ENCODE measurements at regions of chrX and their contacts with region 1.

Region 1: DNA sequence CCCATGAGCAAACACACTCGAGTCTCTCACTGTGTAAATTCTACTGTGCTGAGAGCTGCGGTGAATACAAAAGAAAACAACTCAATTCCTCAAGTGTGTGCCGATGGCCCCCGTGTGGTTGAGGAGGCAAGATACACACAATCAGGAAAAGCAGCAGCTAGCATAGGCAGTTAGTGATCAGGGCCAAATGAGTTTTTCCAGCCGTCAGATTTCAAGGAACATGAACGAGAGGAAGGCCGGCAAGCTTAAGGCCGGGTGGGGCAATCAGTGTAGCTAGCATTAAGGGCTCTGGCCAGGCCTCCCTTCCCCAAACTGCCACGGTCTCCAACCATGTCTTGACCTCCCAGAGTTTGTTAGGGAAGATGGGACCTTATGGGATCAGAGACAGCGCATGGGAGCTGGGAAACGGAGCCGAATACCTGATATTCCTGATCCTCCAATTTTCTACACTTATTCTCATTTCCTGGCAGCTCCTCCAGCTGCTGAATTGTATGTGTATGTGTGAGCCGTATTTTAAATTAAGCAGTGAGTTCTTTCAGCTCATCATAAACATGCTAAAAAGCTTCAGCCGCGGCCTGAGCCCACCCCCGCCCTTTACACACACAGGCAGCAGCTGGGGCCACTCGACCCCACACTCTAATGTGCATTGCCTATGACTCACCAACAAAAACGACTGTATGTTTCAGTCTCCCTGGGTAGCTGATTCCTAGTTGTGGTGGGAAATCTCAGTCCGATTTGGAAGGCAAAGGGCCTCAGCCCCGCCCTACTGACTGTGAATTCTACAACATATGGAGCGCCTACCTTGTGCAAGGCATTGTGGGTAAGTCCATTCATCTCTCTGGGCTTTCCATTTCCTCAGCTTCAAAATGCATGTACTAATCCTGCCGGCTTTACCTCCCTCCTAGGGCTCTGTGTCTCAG is 59.9 kb downstream of the RTL9 start:
- DNase-seq: no peak
- ATAC-seq: peak; percentile 78
- H3K4me3 ChIP-seq: no peak overlapping the region
- H3K27ac ChIP-seq: no peak overlapping the region
- H3K4me1 ChIP-seq: no peaks in the 10 kb centered on the region
- H3K27me3 ChIP-seq: peaks cover 3% of the 10 kb centered on the region; the same call in 1 of the 2 replicates
- CTCF ChIP-seq: peak; percentile 68

Region 2: GRCh38 chrX:110402479-110403230 is 15.9 kb before region 1 on chrX:
- CTCF ChIA-PET with region 1: no interaction called
- POLR2A ChIA-PET with region 1: no interaction called
- in situ Hi-C with region 1: no loop called
- intact Hi-C with region 1: no loop called
- DNase-seq: no peak
- ATAC-seq: no peak
- H3K4me3 ChIP-seq: no peak overlapping the region
- H3K27ac ChIP-seq: no peak overlapping the region
- H3K4me1 ChIP-seq: no peaks in the 10 kb centered on the region
- H3K27me3 ChIP-seq: peaks cover 7% of the 10 kb centered on the region
- CTCF ChIP-seq: no peak

Region 3: DNA sequence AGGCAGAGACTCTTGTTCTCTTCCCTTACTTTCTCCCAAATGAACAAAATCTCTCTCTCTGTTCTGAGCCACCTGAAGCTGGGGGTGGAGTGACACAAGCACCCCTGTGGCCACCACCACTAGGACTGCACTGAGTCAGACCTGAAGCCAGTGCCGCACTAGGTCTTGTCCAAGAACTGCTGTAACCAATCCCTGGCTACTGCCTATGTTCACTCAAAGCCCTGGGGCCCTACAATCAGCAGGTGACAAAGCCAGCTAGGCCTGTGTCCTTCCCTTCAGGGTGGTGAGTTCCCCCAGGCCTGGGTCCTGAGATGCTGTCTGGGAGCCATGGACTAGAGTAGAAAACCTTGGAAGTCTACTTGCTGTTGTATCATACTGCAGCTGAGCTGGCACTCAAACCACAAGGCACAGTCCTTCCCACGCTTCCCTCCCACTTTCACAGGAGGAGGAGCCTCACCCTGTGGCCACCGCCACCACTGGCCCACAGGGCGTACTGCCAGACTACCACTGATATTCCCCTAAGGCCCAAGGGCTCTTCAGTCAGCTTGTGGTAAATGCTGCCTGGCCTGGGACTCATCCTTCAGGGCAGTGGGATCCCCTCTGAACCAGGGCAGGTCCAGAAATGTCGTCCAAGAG is 59.1 kb after region 1 on chrX:
- CTCF ChIA-PET with region 1: no interaction called
- POLR2A ChIA-PET with region 1: interaction called, 12 read pairs
- in situ Hi-C with region 1: no loop called
- intact Hi-C with region 1: no loop called
- DNase-seq: no peak
- ATAC-seq: no peak
- H3K4me3 ChIP-seq: no peak overlapping the region
- H3K27ac ChIP-seq: no peak overlapping the region
- H3K4me1 ChIP-seq: no peaks in the 10 kb centered on the region
- H3K27me3 ChIP-seq: no peaks in the 10 kb centered on the region
- CTCF ChIP-seq: no peak

Region 4: GRCh38 chrX:110491846-110492620 is 73.5 kb after region 1 on chrX:
- CTCF ChIA-PET with region 1: no interaction called
- POLR2A ChIA-PET with region 1: no interaction called
- in situ Hi-C with region 1: no loop called
- intact Hi-C with region 1: no loop called
- DNase-seq: no peak
- ATAC-seq: no peak
- H3K4me3 ChIP-seq: no peak overlapping the region
- H3K27ac ChIP-seq: no peak overlapping the region
- H3K4me1 ChIP-seq: no peaks in the 10 kb centered on the region
- H3K27me3 ChIP-seq: no peaks in the 10 kb centered on the region
- CTCF ChIP-seq: no peak